PC-3 (cell line): ENCODE measurements at regions of chr1 and their contacts with region 1.

Region 1: GRCh38 chr1:110963691-110964399 is at the start of gene LRIF1:
- DNase-seq: peak; percentile 99
- ATAC-seq: peak; percentile 100
- H3K4me3 ChIP-seq: peak within 1 kb of the TSS; percentile 93
- H3K27ac ChIP-seq: peak within 1 kb of the TSS; percentile 93
- H3K4me1 ChIP-seq: peaks cover 28% of the 10 kb centered on the region
- H3K27me3 ChIP-seq: no peaks in the 10 kb centered on the region
- CTCF ChIP-seq: 0 out of 2 replicates have a peak, but pooled peaks have one; percentile 15
- total RNA-seq, gene LRIF1: 12.6 and 18.1 TPM in 2 replicates

Region 2: GRCh38 chr1:110857964-110858948 is 105.6 kb before region 1 on chr1:
- CTCF ChIA-PET with region 1: no interaction called
- POLR2A ChIA-PET with region 1: no interaction called
- intact Hi-C with region 1: no loop called
- DNase-seq: peak; percentile 39
- ATAC-seq: peak; percentile 71; the same call in 1 of the 2 replicates
- H3K4me3 ChIP-seq: no peak overlapping the region
- H3K27ac ChIP-seq: no peak overlapping the region
- H3K4me1 ChIP-seq: no peaks in the 10 kb centered on the region
- H3K27me3 ChIP-seq: peaks cover 35% of the 10 kb centered on the region
- CTCF ChIP-seq: no peak

Region 3: GRCh38 chr1:110916669-110917306 is 47.1 kb before region 1 on chr1:
- CTCF ChIA-PET with region 1: no interaction called
- POLR2A ChIA-PET with region 1: interaction called, 6 read pairs
- intact Hi-C with region 1: loop called (anchors 1 kb)
- DNase-seq: peak; percentile 72
- ATAC-seq: peak; percentile 99
- H3K4me3 ChIP-seq: peak overlapping the region; percentile 60
- H3K27ac ChIP-seq: peak overlapping the region; percentile 43
- H3K4me1 ChIP-seq: peaks cover 14% of the 10 kb centered on the region
- H3K27me3 ChIP-seq: no peaks in the 10 kb centered on the region
- CTCF ChIP-seq: no peak

Region 4: DNA sequence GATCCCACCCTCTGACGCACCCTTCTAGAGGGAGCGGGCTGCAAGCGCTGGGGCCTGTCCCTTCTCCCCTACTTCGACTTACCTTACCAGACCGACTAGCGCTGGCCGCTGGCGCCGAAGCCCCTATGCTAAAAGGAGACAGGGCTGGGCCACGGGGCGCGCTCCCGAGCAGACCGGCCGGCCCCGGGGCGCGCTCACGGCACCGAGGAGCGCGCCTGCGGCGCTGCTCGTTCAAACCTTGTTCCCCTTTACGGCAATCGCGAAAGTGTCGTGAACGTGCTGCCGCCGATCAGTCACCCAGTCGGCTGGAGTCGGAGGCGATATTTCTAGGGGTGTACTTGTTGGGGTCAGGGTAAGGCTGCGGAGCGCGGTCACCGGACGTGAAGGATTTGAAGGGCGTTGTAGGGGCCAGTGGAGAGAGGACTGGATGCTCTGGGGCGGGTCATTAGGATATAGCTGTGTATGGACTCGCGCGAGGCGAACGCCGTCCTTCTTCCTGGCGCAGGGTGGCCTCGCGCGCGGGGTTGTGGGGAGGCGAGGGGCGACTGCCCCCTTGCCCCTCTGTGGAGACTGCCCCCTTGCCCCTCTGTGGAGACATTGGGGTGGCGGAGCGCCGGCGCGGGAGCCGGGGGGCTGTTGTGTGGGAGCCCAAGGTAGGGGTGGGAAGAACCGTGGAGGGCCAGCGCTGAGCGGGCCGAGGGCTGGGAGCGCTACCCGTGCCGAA is 176.3 kb after region 1 on chr1 and contains the starts of genes CEPT1 and DRAM2:
- CTCF ChIA-PET with region 1: no interaction called
- POLR2A ChIA-PET with region 1: no interaction called
- intact Hi-C with region 1: loop called (anchors 1 kb)
- DNase-seq: peak; percentile 97
- ATAC-seq: peak; percentile 71
- H3K4me3 ChIP-seq: peak within 1 kb of the TSS; percentile 88
- H3K27ac ChIP-seq: peak within 1 kb of the TSS; percentile 47
- H3K4me1 ChIP-seq: peaks cover 23% of the 10 kb centered on the region
- H3K27me3 ChIP-seq: no peaks in the 10 kb centered on the region
- CTCF ChIP-seq: no peak
- total RNA-seq, gene CEPT1: 20.6 and 29.6 TPM in 2 replicates
- total RNA-seq, gene DRAM2: 25.7 and 30.0 TPM in 2 replicates